Sigmoid colon (tissue), 7 donors: ENCODE measurements at regions of chr11 and their contacts with region 1.

Region 1: DNA sequence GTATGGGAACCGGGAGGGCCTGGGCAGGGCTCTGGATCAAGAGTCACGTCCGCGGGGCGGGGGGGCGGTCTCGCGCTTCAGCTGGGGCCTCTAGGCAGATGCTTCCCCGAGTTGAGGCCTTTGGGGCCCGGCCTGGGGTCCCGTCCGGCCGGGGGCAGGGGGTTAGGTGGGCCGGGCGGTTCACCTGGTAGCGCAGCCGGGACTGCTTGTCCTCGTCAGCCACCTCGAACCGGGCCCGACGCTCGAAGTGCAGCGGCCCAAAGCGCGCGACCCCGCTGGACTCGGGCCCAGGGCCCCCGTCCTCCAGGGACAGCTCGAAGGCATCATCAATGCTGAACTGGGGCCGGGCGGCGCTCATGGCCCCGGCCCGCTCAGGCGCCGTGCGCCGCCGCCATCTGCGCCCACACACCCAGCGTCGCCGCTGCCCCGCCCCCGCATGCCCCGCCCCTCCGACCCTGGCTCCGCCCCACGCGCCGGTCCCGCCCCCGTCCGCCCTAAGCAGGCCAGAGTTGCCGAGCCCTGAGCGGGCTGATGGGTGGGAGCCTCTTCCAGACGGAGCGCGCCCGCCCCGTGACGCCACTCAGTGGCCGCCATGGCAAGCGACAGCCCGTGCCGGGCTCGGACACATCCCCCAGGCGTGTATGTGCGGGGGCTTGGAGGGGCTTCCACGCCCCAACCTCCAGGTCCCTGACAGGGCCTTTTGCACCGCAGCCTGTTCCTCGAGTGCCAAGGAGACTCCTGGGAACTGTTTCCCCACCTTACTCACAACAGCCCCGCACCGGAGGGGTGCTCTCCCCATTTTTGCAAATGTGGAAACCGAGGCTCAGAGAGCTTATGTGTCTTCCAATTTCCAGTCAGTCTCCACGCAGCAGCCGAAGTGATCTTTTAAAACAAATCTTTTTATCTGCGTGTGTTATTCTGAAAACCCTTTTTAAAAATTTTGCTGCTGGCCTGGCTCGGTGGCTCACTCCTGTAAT is at the start of gene TMEM134:
- DNase-seq: peak; percentile 97
- H3K4me3 ChIP-seq: peak within 1 kb of the TSS; percentile 90 to 96 (median 93)
- H3K27ac ChIP-seq: peak within 1 kb of the TSS; percentile 91 to 95 (median 92)
- H3K4me1 ChIP-seq: peaks cover 0 to 45% (median 33%) of the 10 kb centered on the region in 4 donors
- H3K27me3 ChIP-seq: no peaks in the 10 kb centered on the region
- CTCF ChIP-seq: peak in 1 of 4 experiments; percentile 41
- EP300 ChIP-seq: no peak
- POLR2A ChIP-seq: peak; percentile 74 to 86
- total RNA-seq, gene TMEM134: 54.6 to 137 (median 121) TPM

Region 2: DNA sequence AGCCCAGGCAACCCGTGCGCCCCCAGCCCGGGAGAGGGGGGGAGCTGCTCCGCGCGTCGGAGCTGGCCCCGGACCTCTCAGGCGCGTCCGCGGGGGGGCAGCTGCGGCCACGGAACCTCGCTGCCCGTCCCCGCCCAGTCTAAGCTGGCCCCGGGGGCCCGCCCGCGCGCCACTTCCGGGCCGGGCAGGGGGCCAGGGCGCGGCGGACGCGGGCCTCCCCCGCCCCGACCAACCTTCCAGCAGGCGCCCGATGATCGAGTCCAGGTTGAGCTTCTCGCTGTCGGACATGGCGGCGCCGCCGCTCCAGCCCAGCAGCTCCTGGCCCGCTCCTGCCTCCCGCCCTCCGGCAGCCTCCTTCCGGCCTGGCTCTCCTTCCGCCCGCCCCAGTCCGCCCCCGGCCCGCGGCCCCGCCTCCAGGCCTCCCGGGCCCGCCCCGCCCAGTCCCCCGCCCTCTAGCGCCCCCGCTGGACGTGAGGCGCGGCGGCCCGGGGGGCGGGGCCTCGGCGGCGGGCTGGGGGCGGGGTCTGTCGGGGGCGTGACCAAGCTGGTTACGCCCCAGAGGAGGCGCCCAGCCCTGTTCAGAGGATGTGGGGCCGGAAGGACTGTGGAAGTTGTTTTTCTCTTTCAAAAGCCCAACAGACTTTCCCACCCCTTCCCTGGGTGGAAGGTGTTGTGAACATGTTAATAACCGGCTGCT is 67.5 kb before region 1 on chr11 and contains the start of gene PPP1CA:
- intact Hi-C with region 1: loop called (anchors 2 kb)
- DNase-seq: peak; percentile 95
- H3K4me3 ChIP-seq: peak within 1 kb of the TSS; percentile 74 to 84 (median 76)
- H3K27ac ChIP-seq: peak within 1 kb of the TSS; percentile 92 to 93 (median 92)
- H3K4me1 ChIP-seq: peaks cover 0 to 43% (median 36%) of the 10 kb centered on the region in 4 donors
- H3K27me3 ChIP-seq: peaks cover 0 to 31% (median 12%) of the 10 kb centered on the region in 3 donors
- CTCF ChIP-seq: peak in 2 of 4 experiments; percentile 11 to 48
- EP300 ChIP-seq: no peak
- POLR2A ChIP-seq: peak in 1 of 2 donors; percentile 70
- total RNA-seq, gene PPP1CA: 59.5 to 87.0 (median 80.0) TPM

Region 3: DNA sequence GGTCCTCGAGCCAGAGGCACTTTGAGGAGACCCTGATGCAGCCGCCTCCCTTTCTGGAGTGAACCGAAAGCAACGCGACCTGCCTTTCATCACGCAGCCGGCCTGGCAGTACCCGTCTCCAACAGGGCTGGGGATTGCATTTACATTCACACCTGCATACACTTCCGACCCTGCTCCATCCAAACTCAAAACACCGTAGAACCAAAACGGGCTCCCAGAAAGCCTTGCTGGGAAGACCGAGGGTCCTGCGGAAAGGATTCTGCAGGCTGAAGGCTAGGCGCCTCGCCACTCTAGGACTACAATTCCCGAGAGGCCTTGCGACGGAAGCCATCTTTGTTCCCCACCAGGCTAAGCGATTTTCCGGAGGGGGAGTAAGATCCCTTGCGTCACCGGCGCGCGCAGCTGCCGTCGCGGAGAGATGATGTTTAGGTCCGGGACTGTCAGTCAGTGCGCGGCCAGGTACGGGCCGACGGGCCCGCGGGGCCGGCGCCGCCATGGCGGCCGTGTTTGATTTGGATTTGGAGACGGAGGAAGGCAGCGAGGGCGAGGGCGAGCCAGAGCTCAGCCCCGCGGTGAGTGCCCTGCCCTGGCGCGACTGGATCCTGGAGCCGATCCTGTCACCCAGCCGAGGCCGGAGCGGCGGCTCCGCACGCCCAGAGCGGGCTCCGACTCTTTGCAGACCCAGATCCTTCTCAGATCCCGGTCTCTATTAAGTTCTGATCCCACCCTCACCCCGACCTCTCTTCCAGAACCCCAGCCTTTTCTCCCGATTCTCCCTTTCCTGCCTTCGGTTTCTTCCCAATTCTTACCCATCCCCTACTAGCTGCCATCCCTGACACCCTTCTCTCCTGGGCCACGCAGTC is 40.8 kb before region 1 on chr11 and contains the start of gene RPS6KB2:
- intact Hi-C with region 1: loop called (anchors 1 kb)
- DNase-seq: peak; percentile 99
- H3K4me3 ChIP-seq: peak within 1 kb of the TSS; percentile 66 to 91 (median 72)
- H3K27ac ChIP-seq: peak within 1 kb of the TSS; percentile 87 to 92 (median 90)
- H3K4me1 ChIP-seq: peaks cover 0 to 19% (median 18%) of the 10 kb centered on the region in 4 donors
- H3K27me3 ChIP-seq: no peaks in the 10 kb centered on the region
- CTCF ChIP-seq: no peak
- EP300 ChIP-seq: peak in 1 of 4 donors; percentile 85
- POLR2A ChIP-seq: peak; percentile 93 to 94
- total RNA-seq, gene RPS6KB2: 27.1 to 70.2 (median 35.2) TPM

Region 4: DNA sequence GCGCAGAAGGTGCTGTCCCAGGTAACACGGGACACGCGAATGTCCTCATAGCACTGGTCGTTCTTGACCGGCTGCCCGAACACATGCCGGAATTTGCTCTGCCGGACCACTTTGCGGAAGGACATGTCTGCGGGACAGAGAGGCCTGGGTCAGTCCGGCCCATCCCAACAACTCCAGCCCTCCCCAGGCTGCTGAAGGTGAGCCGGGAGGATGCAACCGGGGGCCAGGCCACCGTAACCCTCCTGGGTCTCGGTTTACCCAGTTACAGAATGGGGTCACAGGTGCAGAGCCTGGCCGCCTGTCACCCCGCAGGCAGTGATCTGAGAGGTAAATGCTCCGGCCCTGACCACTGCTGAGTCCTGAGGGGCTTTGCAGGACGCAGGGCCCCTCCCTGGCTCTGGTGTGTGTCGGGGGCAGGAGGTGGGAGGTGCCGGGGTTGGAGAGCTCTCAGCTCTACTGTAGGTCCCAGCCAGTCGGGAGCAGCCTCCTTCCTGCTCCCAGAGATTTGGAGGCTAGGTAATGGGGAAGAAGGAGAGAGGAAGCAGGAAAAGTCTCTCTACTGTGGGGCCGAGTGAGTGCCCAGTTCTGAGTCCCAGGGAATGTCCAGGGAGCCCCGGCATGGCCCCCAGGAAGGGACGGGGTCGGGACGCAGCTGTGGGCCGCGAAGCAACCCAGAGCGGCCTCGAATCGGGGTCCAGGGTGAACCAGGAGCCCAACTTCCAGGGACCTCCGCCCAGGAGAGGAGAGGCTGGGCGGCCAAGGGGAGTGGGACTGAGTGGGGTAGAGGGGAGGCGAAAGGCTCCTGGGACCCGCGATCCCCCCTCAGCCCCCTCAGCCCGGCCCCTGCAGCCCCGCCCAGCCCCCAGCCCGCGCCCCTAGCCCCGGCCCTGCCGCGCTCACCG is 26.4 kb before region 1 on chr11:
- intact Hi-C with region 1: loop called (anchors 1 kb)
- DNase-seq: no peak
- H3K4me3 ChIP-seq: peak overlapping the region; percentile 80 to 95 (median 86)
- H3K27ac ChIP-seq: peak overlapping the region; percentile 95 to 98 (median 96)
- H3K4me1 ChIP-seq: peaks cover 0 to 31% (median 21%) of the 10 kb centered on the region in 4 donors
- H3K27me3 ChIP-seq: no peaks in the 10 kb centered on the region
- CTCF ChIP-seq: no peak
- EP300 ChIP-seq: no peak
- POLR2A ChIP-seq: no peak

Region 5: DNA sequence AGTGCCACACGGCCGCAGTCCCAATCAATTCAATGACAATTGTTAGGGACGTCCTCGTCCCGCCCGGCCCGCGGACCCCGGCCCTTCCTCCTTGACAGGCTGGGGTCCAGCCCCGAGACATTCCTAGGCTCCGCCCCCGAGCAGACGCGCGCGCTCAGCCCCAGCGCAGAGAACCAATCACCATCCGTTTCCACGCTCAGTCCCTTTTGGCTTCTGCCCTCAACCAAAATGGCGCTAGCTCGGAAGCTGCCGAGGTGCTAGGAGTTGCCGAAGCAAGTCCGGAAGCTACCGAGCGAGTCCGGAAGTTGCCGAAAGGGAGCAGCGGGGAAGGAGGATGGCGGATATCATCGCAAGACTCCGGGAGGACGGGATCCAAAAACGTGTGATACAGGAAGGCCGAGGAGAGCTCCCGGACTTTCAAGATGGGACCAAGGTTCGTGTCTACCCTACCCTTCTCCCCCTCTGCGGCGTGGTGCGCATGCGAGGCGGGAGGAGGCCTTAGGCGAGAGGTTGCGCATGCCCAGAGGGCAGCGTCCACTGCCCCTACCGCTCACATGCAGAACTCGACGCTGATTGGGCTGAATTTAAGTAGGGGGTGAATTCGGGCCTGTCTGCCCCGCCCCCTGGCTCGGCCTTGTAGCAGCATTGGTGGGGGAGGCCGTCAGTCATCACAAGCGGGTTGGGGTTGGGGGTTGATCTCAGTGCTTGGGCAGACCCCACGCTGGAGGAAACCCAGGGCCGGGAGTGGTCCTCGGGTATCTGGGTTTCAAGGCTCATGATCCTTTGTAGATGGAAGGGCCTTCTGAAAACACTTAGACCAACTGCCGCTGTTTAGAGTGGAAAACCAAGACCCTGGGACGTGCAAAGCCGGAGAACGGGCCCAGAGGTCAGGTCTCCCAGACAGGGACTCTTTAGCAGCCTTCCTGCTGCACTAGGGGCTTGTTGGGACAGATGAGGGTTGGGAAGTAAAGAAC is 14.0 kb after region 1 on chr11 and contains the start of gene AIP:
- intact Hi-C with region 1: loop called (anchors 1 kb)
- DNase-seq: peak; percentile 99
- H3K4me3 ChIP-seq: peak within 1 kb of the TSS; percentile 36 to 59 (median 51)
- H3K27ac ChIP-seq: peak within 1 kb of the TSS; percentile 81 to 87 (median 82)
- H3K4me1 ChIP-seq: peaks cover 0 to 37% (median 24%) of the 10 kb centered on the region in 4 donors
- H3K27me3 ChIP-seq: no peaks in the 10 kb centered on the region
- CTCF ChIP-seq: peak in 1 of 4 experiments; percentile 50
- EP300 ChIP-seq: no peak
- POLR2A ChIP-seq: peak; percentile 42 to 56
- total RNA-seq, gene AIP: 103 to 120 (median 109) TPM